Astrocyte of the cerebellum (primary cell): ENCODE measurements at regions of chr7 and their contacts with region 1.

Region 1: DNA sequence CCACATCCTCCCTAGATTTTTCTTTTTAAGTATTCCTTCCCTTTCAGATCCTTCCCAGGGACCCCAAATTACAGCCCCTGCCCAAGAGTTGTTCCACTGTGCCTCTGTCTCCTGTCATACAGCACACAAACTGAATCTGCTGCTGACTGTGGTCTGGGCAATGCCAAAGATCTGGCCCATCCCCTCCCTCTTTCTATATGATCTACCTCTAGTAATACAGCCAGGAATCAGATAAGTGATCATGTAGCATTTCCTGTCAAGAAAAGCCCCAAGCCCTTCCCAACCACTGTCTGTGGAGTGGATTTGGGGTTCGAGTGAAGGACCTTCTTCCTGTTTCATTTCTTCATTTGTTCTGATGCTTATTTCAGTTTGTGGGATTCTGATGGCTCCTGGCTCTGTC is 6.7 kb downstream of the STX1A start:
- DNase-seq: no peak
- H3K4me3 ChIP-seq: no peak overlapping the region
- CTCF ChIP-seq: no peak

Region 2: DNA sequence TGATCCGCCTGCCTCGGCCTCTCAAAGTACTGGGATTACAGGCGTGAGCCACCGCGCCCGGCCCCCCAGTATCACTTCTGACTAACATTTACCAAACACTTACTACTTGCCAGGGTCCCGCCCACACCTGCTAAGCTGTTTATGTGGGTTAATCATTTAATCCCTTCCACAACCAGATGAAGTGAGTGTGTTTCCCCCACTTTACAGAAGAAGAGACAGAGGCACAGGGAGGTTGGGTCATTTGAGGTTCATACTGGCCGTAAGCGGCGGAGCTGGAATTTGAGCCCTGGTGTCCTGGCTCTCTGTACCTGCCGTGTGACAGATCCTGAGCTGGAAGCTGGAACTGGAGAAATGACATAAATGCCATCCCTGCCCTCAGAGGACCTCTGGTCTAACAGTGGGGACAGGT is 60.2 kb before region 1 on chr7:
- in situ Hi-C with region 1: no loop called
- DNase-seq: no peak
- H3K4me3 ChIP-seq: no peak overlapping the region
- CTCF ChIP-seq: no peak

Region 3: GRCh38 chr7:73671317-73671651 is 41.5 kb before region 1 on chr7:
- in situ Hi-C with region 1: loop called (anchors 5 kb)
- DNase-seq: no peak
- H3K4me3 ChIP-seq: no peak overlapping the region
- CTCF ChIP-seq: no peak